BJ (cell line): ENCODE measurements at regions of chr17 and their contacts with region 1.

Region 1: GRCh38 chr17:2672026-2672425 is 39.5 kb downstream of the CLUH start:
- DNase-seq: no peak
- H3K4me3 ChIP-seq: no peak overlapping the region
- H3K27me3 ChIP-seq: no peaks in the 10 kb centered on the region
- CTCF ChIP-seq: no peak

Region 2: GRCh38 chr17:2511462-2512369 is 160.3 kb before region 1 on chr17 and contains the start of gene METTL16:
- CTCF ChIA-PET with region 1: no interaction called
- POLR2A ChIA-PET with region 1: interaction called, 21 read pairs
- DNase-seq: peak; percentile 92
- H3K4me3 ChIP-seq: peak within 1 kb of the TSS; percentile 71
- H3K27me3 ChIP-seq: no peaks in the 10 kb centered on the region
- CTCF ChIP-seq: no peak
- polyA plus RNA-seq, gene METTL16: 10.4 and 12.9 TPM in 2 replicates